ENCODE measurements at regions of chr10 and their contacts with region 1.

Region 1: DNA sequence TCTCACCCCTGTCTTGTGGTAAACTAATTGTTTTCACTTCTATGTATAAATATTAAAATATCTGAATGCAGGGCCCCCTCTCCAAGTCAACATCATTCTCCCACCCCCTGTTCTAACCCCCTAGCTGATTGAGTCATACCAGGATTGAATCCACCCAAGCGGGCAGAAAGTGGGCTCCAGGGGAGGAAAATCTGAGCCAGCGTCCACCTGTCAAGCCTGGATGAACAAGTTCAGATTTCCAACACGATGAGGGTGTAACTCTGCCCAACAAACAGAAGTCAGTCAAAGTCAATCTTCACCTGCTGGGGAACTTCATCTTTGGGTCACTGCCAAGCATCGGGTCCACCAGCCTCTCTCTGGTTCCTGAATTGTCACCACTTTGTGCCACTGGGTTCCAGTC is 162.9 kb upstream of the CELF2 start:
- DNase-seq: no peak
- H3K4me3 ChIP-seq: no peak overlapping the region
- H3K27ac ChIP-seq: no peak overlapping the region
- H3K4me1 ChIP-seq: no peaks in the 10 kb centered on the region
- H3K27me3 ChIP-seq: no peaks in the 10 kb centered on the region
- CTCF ChIP-seq: no peak
- POLR2A ChIP-seq: no peak

Region 2: DNA sequence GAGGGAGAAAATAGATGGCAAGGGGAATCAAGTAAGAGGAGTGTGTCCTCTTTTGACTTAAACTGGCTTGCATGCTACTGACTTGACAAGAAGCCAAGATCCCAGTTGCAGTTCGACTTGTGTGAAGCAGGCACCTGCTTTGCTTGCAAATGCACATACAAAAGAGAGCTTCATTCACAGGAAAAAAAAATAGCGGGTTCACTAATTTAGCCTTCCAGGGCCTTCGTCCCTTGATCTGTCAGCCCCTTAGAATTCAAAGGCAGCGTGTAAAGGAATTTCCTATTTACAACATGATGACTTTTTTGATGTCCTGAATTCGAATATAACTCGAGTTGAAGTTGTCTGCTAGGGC is 355.1 kb after region 1 on chr10:
- intact Hi-C with region 1: no loop called
- DNase-seq: no peak
- H3K4me3 ChIP-seq: no peak overlapping the region
- H3K27ac ChIP-seq: peak overlapping the region; percentile 17
- H3K4me1 ChIP-seq: peaks cover 24% of the 10 kb centered on the region
- H3K27me3 ChIP-seq: no peaks in the 10 kb centered on the region
- CTCF ChIP-seq: no peak
- POLR2A ChIP-seq: no peak

Region 3: DNA sequence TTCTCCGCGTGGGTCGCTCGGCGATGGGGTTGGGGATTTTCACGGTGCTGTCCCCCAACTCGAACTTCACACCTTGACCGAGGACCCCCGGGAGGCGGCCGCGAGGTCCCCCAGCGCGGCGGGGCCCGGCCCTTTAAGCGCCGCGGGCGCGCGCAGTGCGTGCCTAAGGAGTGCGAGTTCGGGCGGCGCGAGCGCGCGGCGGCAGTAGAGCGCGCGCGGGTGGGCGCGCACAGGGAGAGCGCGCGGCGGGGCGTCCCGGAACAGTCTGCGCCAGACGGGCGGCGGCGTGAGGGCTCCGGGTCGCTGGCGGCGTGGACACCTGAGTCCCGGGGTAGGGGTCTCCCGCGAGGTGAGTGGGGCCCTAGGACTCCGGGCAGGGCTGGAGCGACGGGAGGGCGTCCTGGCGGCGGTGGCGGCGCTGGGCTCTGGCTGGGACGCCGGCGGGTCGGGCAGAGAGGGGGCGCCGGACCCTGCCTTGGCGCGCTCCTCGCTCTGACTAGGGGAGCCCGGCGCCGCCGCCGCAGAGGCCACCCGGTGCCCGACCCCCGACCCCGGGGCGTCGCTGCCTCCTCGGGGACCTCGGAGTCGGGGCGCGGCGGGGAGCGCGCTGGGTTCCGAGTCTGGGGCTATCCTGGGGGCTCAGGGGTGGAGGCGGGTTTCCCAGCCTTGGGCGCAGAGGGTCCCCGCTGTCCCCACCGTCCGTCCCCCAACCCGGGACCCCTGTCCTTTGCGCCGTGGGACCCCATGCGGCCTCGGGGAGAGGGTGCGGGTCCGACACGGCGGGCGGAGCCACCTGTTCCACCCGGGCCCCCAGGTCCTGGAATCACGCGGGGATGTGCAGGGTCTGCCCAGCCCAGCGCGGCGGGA is 968.6 kb after region 1 on chr10 and contains the start of gene PROSER2:
- intact Hi-C with region 1: loop called (anchors 5 kb)
- DNase-seq: no peak
- H3K4me3 ChIP-seq: peak within 1 kb of the TSS; percentile 50 to 63
- H3K27ac ChIP-seq: peak within 1 kb of the TSS; percentile 68
- H3K4me1 ChIP-seq: peaks cover 23% of the 10 kb centered on the region
- H3K27me3 ChIP-seq: no peaks in the 10 kb centered on the region
- CTCF ChIP-seq: no peak
- POLR2A ChIP-seq: no peak
- total RNA-seq, gene PROSER2: 8.1 TPM